ENCODE measurements at regions of chr7 and their contacts with region 1.

Region 1: GRCh38 chr7:16564909-16565426 is 38.3 kb downstream of the LRRC72 start:
- DNase-seq: no peak
- ATAC-seq: peak in 6 of 8 donors; percentile 45 to 64 (median 52)
- H3K4me3 ChIP-seq: no peak overlapping the region
- H3K27ac ChIP-seq: no peak overlapping the region
- H3K4me1 ChIP-seq: peaks cover 0 to 7% (median 0%) of the 10 kb centered on the region in 9 donors
- H3K27me3 ChIP-seq: no peaks in the 10 kb centered on the region
- CTCF ChIP-seq: peak; percentile 63 to 87 (median 82)

Region 2: DNA sequence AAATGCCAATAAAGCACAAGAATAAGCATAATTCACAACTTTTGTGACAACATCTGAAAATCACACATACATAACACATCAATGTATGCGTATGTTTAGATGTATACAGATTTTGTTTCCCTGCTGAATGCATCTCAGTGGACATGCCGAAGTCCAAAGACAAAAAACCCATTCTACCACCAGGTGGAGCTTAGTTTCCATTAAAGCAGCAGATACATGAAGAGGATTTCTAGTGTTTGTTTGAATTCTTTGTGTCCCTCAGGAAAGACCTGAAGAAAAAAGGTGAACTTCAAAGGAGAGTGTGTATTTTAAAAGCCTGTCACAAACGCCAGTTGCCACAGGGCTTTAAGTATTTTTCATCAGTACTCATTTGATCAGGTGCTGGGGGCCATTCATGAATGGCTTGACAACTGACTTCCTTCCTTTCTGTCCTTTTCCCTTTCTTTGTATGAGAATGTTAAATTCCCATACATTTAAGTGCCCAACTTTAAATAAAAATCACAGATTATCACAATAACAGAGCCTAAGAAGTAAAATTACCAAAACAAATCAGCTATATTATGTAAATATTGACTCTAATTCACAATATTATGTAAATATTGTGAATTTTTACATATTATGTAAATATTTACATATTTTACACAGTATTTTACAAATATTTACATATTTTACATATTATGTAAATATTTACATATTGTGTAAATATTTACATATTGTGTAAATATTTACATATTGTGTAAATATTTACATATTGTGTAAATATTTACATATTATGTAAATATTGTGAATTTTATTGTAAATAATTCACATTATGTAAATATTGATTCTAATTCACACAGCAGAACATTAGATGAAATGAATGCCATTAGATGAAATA is 486.7 kb before region 1 on chr7:
- intact Hi-C with region 1: loop called (anchors 2 to 10 kb)
- DNase-seq: peak in 1 of 2 donors; percentile 48
- ATAC-seq: peak in 6 of 8 donors; percentile 56 to 79 (median 64)
- H3K4me3 ChIP-seq: no peak overlapping the region
- H3K27ac ChIP-seq: no peak overlapping the region
- H3K4me1 ChIP-seq: peaks cover 0 to 4% (median 0%) of the 10 kb centered on the region in 9 donors
- H3K27me3 ChIP-seq: no peaks in the 10 kb centered on the region
- CTCF ChIP-seq: peak; percentile 39 to 85 (median 72)

Region 3: DNA sequence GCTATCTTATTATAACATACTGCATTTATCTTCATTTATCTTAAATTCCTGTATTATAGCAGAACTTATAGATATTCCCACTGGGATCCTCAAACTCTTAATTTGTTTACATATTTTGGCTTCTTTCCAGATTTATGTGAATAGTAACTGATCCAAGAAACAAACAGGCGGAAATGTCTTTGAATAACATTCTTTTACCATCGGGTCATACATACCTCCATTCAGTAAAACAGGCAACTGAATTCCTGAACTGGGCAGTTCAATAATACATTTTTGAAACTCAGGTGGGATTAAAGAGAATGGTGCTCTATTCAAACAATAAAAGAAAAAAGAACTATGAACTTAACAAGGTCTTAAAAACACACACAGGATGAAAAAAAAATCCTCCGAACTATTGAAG is 481.0 kb before region 1 on chr7:
- intact Hi-C with region 1: loop called in 9 of 10 experiments (anchors 2 to 10 kb)
- DNase-seq: no peak
- ATAC-seq: no peak
- H3K4me3 ChIP-seq: no peak overlapping the region
- H3K27ac ChIP-seq: peak overlapping the region in 2 of 10 donors; percentile 15 to 45
- H3K4me1 ChIP-seq: peaks cover 0 to 3% (median 0%) of the 10 kb centered on the region in 9 donors
- H3K27me3 ChIP-seq: no peaks in the 10 kb centered on the region
- CTCF ChIP-seq: no peak

Region 4: GRCh38 chr7:16114633-16115032 is 450.3 kb before region 1 on chr7:
- intact Hi-C with region 1: loop called in 7 of 10 experiments (anchors 2 to 5 kb)
- DNase-seq: no peak
- ATAC-seq: no peak
- H3K4me3 ChIP-seq: no peak overlapping the region
- H3K27ac ChIP-seq: no peak overlapping the region
- H3K4me1 ChIP-seq: no peaks in the 10 kb centered on the region
- H3K27me3 ChIP-seq: no peaks in the 10 kb centered on the region
- CTCF ChIP-seq: peak in 8 of 9 donors; percentile 20 to 63 (median 49)

Region 5: DNA sequence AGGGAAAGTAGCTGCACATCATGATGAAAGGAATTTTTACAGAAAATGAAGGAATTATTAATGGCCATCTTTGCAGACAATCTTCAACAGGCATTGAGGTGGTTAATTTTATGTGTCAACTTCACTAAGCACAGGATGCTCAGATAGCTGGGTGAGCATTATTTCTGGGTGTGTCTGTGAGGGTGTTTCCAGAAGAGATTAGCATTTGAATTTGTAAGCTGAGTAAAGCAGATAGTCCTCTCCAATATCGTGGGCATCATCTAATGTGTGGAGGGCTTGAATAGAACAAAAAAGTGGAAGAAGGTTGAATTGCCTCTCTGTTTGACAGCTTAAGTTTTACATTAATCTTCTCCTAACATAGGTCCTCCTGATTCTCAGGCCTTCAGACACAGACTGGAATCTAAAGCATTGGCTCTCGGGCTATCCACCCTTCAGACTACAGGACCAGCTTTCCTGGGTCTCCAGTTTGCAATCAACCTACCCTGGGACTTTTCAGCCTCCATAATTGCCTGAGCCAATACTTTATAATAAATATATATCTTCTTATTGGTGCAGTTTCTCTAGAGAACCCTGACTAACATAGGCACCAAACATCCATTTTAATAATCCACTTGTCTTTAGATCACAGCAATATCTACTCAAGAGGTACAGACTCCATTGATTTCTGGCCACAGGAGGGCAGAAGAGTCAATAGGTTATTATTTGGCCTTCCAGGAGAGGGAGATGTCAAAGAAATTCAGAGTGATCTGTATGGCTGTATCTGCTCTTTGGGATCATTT is 133.1 kb before region 1 on chr7:
- intact Hi-C with region 1: loop called in 9 of 10 experiments (anchors 2 to 5 kb)
- DNase-seq: peak in 1 of 2 donors; percentile 14
- ATAC-seq: peak in 3 of 8 donors; percentile 44 to 53 (median 51)
- H3K4me3 ChIP-seq: no peak overlapping the region
- H3K27ac ChIP-seq: no peak overlapping the region
- H3K4me1 ChIP-seq: no peaks in the 10 kb centered on the region
- H3K27me3 ChIP-seq: no peaks in the 10 kb centered on the region
- CTCF ChIP-seq: peak; percentile 23 to 67 (median 55)

Region 6: GRCh38 chr7:17674166-17674961 is 1109.4 kb after region 1 on chr7:
- intact Hi-C with region 1: no loop called
- DNase-seq: no peak
- ATAC-seq: no peak
- H3K4me3 ChIP-seq: no peak overlapping the region
- H3K27ac ChIP-seq: no peak overlapping the region
- H3K4me1 ChIP-seq: peaks cover 0 to 6% (median 0%) of the 10 kb centered on the region in 9 donors
- H3K27me3 ChIP-seq: no peaks in the 10 kb centered on the region
- CTCF ChIP-seq: no peak